Activated B cell treated with CpG ODN at 0.5 μM for 24 hours (primary cell): ENCODE measurements at regions of chr17 and their contacts with region 1.

Region 1: DNA sequence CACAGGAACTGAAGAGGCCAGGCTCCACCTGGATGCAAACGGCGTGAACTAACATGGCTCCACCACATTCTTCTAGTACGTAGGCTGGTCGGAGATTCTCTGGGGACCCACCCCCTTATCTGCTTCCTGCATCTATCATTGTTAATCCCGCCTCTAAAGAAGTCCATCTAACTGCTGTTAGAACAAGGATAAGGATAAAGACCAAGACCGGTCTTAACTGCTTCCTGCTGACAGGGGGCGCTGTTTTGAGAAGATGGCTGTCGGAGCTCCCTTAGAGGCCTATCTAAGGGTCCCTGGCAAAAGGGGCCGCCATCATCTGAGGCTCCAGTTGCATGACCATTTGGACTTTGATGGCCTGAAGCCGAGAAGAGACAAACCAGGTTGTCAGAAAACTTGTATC is 25.8 kb upstream of the TNFSF12 start:
- DNase-seq: peak; percentile 27
- ATAC-seq: peak; percentile 58
- H3K4me3 Mint-ChIP-seq: no peak overlapping the region
- H3K27ac Mint-ChIP-seq: no peak overlapping the region
- H3K4me1 Mint-ChIP-seq: peaks cover 4% of the 10 kb centered on the region
- H3K27me3 Mint-ChIP-seq: no peaks in the 10 kb centered on the region
- CTCF ChIP-seq: no peak

Region 2: GRCh38 chr17:7460850-7461660 is 62.0 kb before region 1 on chr17:
- CTCF ChIA-PET with region 1: no interaction called
- POLR2A ChIA-PET with region 1: interaction called, 13 read pairs
- intact Hi-C with region 1: no loop called
- DNase-seq: no peak
- ATAC-seq: no peak
- H3K4me3 Mint-ChIP-seq: no peak overlapping the region
- H3K27ac Mint-ChIP-seq: no peak overlapping the region
- H3K4me1 Mint-ChIP-seq: peaks cover 6% of the 10 kb centered on the region
- H3K27me3 Mint-ChIP-seq: no peaks in the 10 kb centered on the region
- CTCF ChIP-seq: no peak

Region 3: GRCh38 chr17:7475764-7476422 is 47.1 kb before region 1 on chr17:
- CTCF ChIA-PET with region 1: no interaction called
- POLR2A ChIA-PET with region 1: interaction called, 11 read pairs
- intact Hi-C with region 1: no loop called
- DNase-seq: no peak
- ATAC-seq: no peak
- H3K4me3 Mint-ChIP-seq: no peak overlapping the region
- H3K27ac Mint-ChIP-seq: peak overlapping the region; percentile 46
- H3K4me1 Mint-ChIP-seq: peaks cover 62% of the 10 kb centered on the region
- H3K27me3 Mint-ChIP-seq: no peaks in the 10 kb centered on the region
- CTCF ChIP-seq: no peak